Activated T-helper 1 cell treated with anti-CD3 and anti-CD28 coated beads, Interleukin-12 subunit alpha, Interleukin-12 subunit beta, Interleukin-2, Interleukin-4 antibody, amounts not matched to agents 30 ng/mL and 10 ng/mL and 1 ng/mL, durations not matched to agents 14 hours and 24 hours and 36 hours (primary cell): ENCODE measurements at regions of chr12 and their contacts with region 1.

Region 1: DNA sequence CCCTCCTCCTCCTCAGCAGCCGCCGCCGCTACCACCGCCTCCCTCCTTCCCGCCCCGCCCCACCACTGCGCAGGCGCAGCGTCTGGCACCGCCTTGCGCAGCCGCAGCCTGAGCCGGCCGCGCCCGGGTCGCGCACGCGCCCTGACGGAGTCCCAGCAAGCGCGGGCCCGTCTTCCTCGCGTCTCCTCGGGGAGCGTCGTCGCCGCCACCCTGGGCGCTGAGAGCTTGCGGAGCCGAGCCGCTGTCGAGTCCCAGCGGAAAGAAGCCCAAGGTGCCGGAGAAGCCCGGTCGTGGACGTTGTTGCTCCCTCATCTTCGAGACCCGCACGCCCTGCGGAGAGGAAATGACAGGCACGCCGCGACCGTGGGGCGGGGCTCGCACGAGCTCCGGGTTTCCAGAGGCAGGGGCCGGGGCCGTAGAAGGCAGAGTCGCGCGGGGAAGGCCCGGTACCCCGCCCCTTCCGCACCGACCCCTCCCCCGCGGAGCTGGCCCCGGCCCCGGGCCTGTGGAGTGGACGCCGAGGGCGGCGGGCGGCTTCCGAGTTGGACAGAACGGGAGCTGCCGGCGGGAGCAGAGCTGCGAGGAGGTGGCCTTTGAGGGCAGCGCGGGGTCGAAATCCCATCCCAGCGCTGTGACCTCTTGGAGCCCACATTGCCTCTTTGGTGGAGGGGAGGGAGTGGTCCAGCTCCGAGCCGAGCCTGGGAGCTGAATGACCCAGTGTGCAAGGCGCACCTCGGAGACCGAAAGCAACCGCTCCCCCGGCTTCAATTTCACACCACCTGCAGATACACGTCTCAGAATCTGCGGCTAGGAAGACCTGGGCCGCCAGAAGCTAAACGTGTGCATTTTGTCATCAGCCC is 469 bp upstream of the RAB35 start:
- DNase-seq: peak; percentile 97
- H3K4me3 Mint-ChIP-seq: peak overlapping the region; percentile 92
- H3K27ac Mint-ChIP-seq: peak overlapping the region; percentile 94
- H3K4me1 Mint-ChIP-seq: peaks cover 72% of the 10 kb centered on the region
- H3K27me3 Mint-ChIP-seq: no peaks in the 10 kb centered on the region

Region 2: DNA sequence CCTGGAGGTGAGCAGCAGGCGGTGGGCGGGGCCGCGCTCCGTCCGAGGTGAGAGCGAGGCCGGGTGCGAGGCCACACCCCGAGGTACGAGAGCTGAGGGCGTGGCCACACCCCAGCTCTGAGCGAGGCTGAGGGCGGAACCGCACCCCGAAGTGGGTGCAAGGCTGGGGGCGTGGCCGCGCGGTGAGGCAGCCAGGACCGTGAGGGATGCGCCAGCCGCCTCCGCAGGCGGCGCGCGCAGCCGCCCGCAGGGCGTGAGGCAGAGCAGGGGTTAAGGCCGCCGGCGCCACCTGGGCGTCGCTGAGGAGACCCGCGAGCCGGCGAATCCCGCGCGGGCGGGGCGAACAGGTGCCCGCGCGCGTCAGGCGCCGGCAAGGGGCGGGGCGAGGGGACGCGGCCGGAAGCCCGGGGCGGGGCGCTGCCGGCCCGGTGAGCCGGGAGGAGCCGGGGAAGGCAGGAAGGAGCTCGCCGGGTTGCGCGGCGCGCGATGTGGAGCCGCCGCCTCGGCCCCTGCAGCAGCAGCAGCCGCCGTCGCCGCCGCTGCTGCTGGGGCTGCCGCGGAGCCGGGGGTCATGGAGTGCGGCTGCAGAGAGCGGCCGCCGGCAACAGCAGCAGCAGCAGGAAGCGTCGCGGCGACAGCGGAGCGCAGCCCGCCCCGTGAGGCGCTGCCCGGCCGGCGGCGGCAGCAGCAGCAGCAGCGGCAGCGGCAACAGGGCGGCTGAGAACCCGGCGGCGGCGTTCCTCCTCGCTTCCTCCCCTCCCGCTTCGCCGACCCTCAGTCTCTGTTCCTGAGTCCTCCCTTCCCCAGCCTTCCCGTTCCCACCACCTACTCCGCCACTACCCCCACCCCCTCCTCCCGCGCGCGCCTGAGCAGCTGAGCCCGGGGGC is 128.0 kb before region 1 on chr12 and contains the start of gene BICDL1:
- intact Hi-C with region 1: loop called (anchors 1 kb)
- DNase-seq: peak; percentile 97
- H3K4me3 Mint-ChIP-seq: peak within 1 kb of the TSS; percentile 94
- H3K27ac Mint-ChIP-seq: peak within 1 kb of the TSS; percentile 95
- H3K4me1 Mint-ChIP-seq: peaks cover 50% of the 10 kb centered on the region
- H3K27me3 Mint-ChIP-seq: peaks cover 11% of the 10 kb centered on the region
- total RNA-seq, gene BICDL1: 136 and 140 TPM in 2 replicates

Region 3: GRCh38 chr12:120086801-120087621 is 30.0 kb before region 1 on chr12:
- intact Hi-C with region 1: loop called (anchors 1 kb)
- DNase-seq: peak; percentile 99
- H3K4me3 Mint-ChIP-seq: peak overlapping the region; percentile 81
- H3K27ac Mint-ChIP-seq: peak overlapping the region; percentile 86
- H3K4me1 Mint-ChIP-seq: peaks cover 32% of the 10 kb centered on the region
- H3K27me3 Mint-ChIP-seq: peaks cover 1% of the 10 kb centered on the region

Region 4: DNA sequence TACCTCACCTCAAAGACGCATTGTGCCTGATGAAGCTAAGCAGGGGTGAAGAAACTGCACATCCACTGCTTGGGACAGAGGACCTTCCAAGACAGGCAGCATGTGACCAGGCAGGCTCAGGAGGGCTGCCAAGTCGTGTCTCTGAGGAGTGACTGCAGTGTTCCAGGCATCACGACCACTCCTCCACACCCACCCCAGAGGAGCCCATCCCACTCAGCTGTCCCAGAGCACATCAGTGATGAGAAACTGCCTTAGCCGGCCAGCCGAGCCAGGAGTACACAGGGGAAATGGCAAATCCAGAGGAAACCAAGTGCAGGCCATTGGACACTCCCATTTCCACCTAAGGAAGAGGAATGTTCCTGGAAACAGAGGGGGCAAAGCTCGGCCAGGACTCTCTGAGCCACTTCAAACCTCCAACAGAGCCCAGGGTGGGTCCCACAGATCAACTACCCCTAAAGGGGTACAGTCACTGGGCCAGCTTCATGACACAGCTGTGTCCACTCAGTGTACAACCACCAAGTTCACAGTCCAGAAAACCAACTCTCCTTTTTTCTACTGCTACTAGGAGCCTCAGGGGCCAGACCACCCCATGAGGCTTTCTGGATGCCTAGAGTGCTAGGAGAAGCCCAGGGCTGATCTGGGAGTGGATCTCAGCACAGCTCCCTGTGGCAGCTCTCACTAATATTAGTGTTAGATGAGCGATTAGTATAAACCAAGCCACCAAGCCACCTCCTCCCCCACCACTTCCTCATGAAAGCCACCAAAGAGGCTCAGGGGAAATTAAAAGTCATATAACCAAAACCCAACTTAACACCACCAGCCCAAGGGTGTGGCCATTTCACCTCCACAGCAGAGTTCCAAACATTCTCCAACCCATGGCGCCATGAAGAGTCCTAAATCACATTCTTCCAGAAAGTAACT is 133.1 kb after region 1 on chr12:
- intact Hi-C with region 1: loop called (anchors 5 kb)
- DNase-seq: peak; percentile 42
- H3K4me3 Mint-ChIP-seq: peak overlapping the region; percentile 73
- H3K27ac Mint-ChIP-seq: peak overlapping the region; percentile 53
- H3K4me1 Mint-ChIP-seq: peaks cover 77% of the 10 kb centered on the region
- H3K27me3 Mint-ChIP-seq: no peaks in the 10 kb centered on the region

Region 5: DNA sequence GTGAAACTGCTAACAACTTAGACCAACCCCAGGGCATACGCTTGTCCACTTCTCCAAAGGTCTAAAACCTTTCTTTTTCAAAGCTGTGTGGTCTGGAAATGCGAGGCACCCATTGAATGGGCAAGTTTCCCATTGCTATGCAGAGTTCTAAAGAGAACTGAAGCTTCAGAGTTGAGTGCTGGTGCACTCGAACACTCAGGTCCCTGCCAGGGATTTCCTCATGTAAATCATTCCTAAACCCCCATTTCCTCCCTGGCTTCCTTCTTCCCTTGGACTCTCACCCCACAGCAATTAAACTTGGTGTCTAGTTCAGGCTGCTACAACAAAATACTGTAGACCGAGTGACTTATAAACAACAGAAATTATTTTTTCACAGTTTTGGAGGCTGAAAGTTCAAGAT is 150.7 kb after region 1 on chr12:
- intact Hi-C with region 1: no loop called
- DNase-seq: no peak
- H3K4me3 Mint-ChIP-seq: no peak overlapping the region
- H3K27ac Mint-ChIP-seq: no peak overlapping the region
- H3K4me1 Mint-ChIP-seq: peaks cover 30% of the 10 kb centered on the region
- H3K27me3 Mint-ChIP-seq: no peaks in the 10 kb centered on the region

Region 6: GRCh38 chr12:120437754-120438494 is 320.9 kb after region 1 on chr12 and contains the start of gene COX6A1:
- intact Hi-C with region 1: loop called (anchors 10 kb)
- DNase-seq: peak; percentile 97
- H3K4me3 Mint-ChIP-seq: peak within 1 kb of the TSS; percentile 100
- H3K27ac Mint-ChIP-seq: peak within 1 kb of the TSS; percentile 98
- H3K4me1 Mint-ChIP-seq: peaks cover 31% of the 10 kb centered on the region
- H3K27me3 Mint-ChIP-seq: no peaks in the 10 kb centered on the region
- total RNA-seq, gene COX6A1: 352 and 365 TPM in 2 replicates